K562 (cell line): ENCODE measurements at regions of chr12 and their contacts with region 1.

Region 1: DNA sequence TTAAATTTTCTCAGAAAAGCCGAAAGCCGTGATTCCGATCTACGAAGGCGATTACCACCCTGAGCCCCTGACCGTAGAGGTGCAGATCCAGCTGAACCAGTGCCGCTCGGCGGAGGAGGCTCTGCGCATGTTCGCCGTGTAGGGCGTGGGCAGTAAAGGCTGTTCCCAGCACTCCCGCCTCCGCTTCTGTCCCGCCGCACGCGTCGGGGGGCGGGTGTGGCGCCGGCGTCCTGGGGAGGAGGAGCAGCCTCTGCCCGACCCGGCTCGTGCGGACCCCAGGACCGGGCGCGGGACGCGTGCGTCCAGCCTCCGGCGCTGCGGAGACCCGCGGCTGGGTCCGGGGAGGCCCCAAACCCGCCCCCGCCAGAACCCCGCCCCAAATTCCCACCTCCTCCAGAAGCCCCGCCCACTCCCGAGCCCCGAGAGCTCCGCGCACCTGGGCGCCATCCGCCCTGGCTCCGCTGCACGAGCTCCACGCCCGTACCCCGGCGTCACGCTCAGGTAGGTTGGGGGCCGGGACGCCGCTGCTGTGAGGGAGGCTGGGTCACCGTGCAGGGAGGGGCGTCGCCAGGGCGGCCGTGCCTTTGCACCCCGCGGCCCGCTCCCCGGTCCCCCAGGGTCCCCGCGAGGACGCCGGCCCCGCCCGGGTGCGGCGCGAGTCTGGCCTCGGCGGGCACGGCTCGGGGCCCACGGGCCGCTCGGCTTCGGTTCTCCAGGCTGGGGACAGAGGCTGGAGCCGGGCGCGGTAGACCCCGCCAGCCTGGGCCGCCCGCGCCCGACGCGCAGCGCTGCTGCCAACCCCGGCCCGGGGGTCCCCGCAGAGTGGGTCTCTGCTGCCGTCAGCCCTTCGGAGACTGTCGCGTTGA is at the start of gene B3GNT4:
- DNase-seq: peak; percentile 83 to 91 (median 88)
- ATAC-seq: peak; percentile 88
- H3K4me3 ChIP-seq: peak within 1 kb of the TSS; percentile 45
- H3K27ac ChIP-seq: peak within 1 kb of the TSS; percentile 51; the same call in 1 of the 3 replicates
- H3K4me1 ChIP-seq: peaks cover 7 to 63% of the 10 kb centered on the region in 2 experiments; a peak in 3 of 5 replicates
- H3K27me3 ChIP-seq: no peaks in the 10 kb centered on the region
- CTCF ChIP-seq: no peak
- EP300 ChIP-seq: no peak
- POLR2A ChIP-seq: peak; percentile 50; the same call in 1 of the 2 replicates
- RAD21 ChIP-seq: no peak
- polyA plus RNA-seq, gene B3GNT4: 0.17 to 0.34 TPM

Region 2: DNA sequence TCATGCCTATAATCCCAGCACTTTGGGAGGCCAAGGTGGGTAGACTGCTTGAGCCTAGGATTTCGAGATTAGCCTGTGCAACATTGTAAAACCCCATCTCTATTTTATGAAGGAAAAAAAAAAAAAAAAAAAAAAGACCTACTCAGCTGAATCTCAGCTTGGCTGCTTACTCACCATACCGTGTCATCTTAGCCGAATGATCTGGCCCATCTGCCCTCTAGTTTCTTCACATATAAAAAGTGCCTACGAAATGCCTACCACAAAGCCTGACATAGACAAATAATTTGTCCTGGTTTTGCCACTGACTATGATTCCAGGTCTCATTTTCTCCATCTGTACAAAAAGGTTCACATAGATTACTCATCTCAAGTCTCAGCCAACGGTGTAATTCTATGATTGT is 12.2 kb after region 1 on chr12:
- CTCF ChIA-PET with region 1: no interaction called
- POLR2A ChIA-PET with region 1: interaction called, 149 read pairs
- in situ Hi-C with region 1: no loop called
- intact Hi-C with region 1: no loop called
- DNase-seq: no peak
- ATAC-seq: no peak
- H3K4me3 ChIP-seq: no peak overlapping the region
- H3K27ac ChIP-seq: no peak overlapping the region
- H3K4me1 ChIP-seq: no peaks in the 10 kb centered on the region
- H3K27me3 ChIP-seq: no peaks in the 10 kb centered on the region
- CTCF ChIP-seq: no peak
- EP300 ChIP-seq: no peak
- POLR2A ChIP-seq: no peak
- RAD21 ChIP-seq: no peak

Region 3: DNA sequence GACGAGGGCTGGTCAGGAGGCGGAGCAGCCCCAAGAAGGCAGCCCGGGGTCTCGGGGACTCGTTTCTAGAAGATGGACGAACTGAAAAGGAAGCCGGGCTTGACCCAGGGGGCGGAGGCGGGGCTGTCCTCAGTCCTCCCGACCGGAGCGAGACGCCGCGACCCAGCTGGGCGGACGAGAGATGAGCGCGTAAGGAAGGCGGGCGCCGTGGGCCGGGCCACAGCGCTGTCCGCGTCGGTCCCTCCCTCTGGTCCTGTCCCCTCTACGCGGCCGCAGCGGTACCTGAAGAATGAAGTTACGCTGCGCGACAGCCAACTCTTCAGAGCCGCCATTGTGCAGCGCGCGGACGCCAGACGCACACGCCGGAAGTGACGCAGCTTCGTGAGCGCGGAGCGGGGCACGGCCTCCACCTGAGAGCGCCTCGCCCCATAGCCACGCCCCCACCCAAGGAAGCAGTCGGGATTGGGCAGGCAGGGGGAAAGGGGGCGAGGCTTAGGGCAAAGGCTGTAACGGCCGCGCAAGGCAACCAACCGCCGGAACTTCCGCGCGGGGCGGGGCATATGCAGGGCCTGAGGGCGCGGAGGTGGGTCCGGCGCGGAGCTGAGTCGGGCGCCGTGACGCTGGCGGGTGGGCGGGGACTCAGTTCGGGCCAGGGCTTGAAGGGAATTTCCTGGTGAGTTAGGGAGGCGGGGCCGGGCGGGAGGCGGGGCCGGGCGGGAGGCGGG is 22.3 kb after region 1 on chr12 and contains the start of gene DIABLO:
- CTCF ChIA-PET with region 1: no interaction called
- POLR2A ChIA-PET with region 1: interaction called, 149 read pairs
- in situ Hi-C with region 1: no loop called
- intact Hi-C with region 1: no loop called
- DNase-seq: peak; percentile 95 to 99 (median 97)
- ATAC-seq: peak; percentile 98
- H3K4me3 ChIP-seq: peak within 1 kb of the TSS; percentile 97
- H3K27ac ChIP-seq: peak within 1 kb of the TSS; percentile 96
- H3K4me1 ChIP-seq: peaks cover 21 to 42% of the 10 kb centered on the region in 2 experiments
- H3K27me3 ChIP-seq: no peaks in the 10 kb centered on the region
- CTCF ChIP-seq: no peak
- EP300 ChIP-seq: peak; percentile 40; the same call in 1 of the 2 replicates
- POLR2A ChIP-seq: peak; percentile 98
- RAD21 ChIP-seq: no peak
- polyA plus RNA-seq, gene DIABLO: 37.3 to 57.9 TPM